IMR-90 (cell line): ENCODE measurements at regions of chr5 and their contacts with region 1.

Region 1: GRCh38 chr5:127863610-127864395 is 160.6 kb downstream of the CCDC192 start:
- DNase-seq: peak; percentile 24
- ATAC-seq: peak; percentile 43
- H3K4me3 ChIP-seq: no peak overlapping the region
- H3K27ac ChIP-seq: no peak overlapping the region
- H3K4me1 ChIP-seq: peaks cover 2% of the 10 kb centered on the region; the same call in 1 of the 2 replicates
- H3K27me3 ChIP-seq: no peaks in the 10 kb centered on the region
- CTCF ChIP-seq: no peak
- POLR2A ChIP-seq: no peak
- RAD21 ChIP-seq: no peak

Region 2: DNA sequence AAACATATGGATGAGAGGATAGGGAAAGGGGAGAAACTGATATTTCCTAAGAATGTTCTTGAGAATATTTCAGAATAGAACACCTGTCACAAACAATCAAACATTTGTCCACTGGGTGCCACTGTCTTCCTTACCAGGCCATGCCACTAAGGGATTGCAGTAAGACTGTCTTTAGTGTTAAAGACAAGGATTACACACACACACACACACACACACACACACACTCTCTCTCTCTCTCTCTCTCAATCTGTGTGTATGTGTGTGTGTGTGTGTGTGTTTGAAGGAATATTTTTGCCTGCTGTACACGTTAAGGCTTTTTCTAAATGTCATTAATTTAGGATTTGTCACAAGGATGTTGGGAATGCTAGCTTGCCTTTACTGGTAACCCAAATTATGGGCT is 106.2 kb before region 1 on chr5:
- CTCF ChIA-PET with region 1: no interaction called
- POLR2A ChIA-PET with region 1: no interaction called
- dilution Hi-C with region 1: no loop called
- in situ Hi-C with region 1: no loop called
- intact Hi-C with region 1: loop called (anchors 5 kb)
- DNase-seq: peak; percentile 65
- ATAC-seq: no peak
- H3K4me3 ChIP-seq: no peak overlapping the region
- H3K27ac ChIP-seq: no peak overlapping the region
- H3K4me1 ChIP-seq: peaks cover 3% of the 10 kb centered on the region
- H3K27me3 ChIP-seq: no peaks in the 10 kb centered on the region
- CTCF ChIP-seq: peak; percentile 54
- POLR2A ChIP-seq: no peak
- RAD21 ChIP-seq: peak; percentile 76

Region 3: GRCh38 chr5:127813633-127814587 is 49.9 kb before region 1 on chr5:
- CTCF ChIA-PET with region 1: no interaction called
- POLR2A ChIA-PET with region 1: no interaction called
- dilution Hi-C with region 1: no loop called
- in situ Hi-C with region 1: no loop called
- intact Hi-C with region 1: loop called (anchors 5 kb)
- DNase-seq: peak; percentile 91
- ATAC-seq: peak; percentile 86
- H3K4me3 ChIP-seq: no peak overlapping the region
- H3K27ac ChIP-seq: peak overlapping the region; percentile 79
- H3K4me1 ChIP-seq: peaks cover 11% of the 10 kb centered on the region
- H3K27me3 ChIP-seq: no peaks in the 10 kb centered on the region
- CTCF ChIP-seq: no peak
- POLR2A ChIP-seq: no peak
- RAD21 ChIP-seq: no peak